ENCODE measurements at regions of chr6 and their contacts with region 1.

Region 1: DNA sequence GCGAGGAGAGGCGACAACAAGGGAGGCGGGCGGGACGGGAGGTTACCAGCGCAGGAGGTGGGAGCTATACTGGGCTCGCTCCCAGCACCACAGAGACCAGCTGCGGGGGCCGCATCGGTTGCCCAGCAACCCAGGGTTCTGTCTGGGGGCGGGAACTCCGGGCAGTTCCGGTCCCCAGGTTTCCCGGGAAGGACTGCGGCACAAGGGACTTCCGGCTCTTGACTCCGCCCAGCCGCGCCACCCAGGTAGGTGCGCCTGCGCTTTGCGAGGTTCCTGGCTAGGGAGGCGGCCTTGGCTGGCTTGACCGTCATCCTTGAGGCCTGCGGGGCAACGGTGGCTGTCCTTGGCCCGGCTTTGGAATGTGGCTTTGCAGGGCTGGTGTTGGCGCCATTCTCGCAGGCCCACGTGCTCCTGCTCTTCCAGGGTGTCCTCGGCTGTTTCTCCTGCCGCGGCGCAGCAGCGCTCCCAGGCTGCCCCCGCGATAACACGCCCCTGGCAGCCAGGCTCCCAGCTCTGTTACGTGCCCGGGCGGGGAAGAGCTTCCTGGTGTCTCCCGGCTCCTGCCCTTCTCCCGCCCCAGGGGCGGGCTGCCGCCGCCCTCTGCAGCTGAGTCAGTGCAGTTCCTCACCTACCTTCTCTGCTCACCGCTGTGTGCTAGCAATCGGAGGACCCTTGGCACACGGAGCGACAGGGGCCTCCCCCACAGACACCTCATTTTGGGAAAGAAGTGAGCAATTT is at the start of gene RSPH3:
- DNase-seq: peak; percentile 86
- H3K4me3 Mint-ChIP-seq: peak within 1 kb of the TSS; percentile 95
- H3K27ac Mint-ChIP-seq: peak within 1 kb of the TSS; percentile 91
- H3K4me1 Mint-ChIP-seq: peaks cover 52% of the 10 kb centered on the region
- H3K27me3 Mint-ChIP-seq: peaks cover 2% of the 10 kb centered on the region
- total RNA-seq, gene RSPH3: 3.8 and 4.2 TPM in 2 replicates

Region 2: DNA sequence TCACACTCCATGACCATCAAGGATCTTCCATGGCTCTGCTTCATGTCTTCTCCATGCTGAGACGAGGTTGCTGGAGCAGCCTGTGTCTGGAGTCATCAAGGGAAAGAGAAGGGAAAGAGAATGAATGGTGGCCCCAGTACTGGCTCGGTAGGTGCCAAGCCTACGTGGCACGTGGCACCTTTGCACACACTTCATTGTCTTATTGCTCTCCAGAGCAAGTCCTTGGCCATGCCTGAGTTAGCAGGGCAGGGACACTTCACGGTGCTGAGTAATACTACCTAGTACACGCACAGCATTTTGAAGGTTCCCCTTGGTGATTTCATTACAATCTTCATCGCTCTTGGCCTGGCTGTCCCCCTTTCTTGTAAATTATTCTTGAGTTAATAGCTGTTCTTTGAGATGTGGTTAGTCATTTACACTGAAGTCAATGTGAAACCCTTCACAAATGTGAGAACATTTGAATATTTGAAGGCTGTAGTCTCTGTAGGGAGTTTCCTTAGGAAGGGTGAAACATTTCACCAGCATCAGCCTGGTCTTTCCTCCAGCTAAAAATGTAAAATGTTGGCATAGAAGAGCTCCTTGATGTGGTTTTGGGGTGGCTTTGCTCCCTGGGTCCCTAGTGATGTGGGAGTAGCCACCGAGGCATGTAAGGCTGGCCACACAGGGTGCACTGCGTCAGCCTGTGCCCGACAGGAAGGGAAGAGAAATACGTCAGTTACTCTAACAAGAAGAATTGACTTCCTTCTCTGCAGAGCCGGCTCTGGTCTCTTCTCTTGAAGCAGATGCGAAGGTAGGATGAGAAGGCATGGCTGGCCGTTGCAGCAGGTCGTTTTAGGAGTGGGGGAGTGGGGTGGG is 350.3 kb before region 1 on chr6 and contains the start of gene SYTL3:
- intact Hi-C with region 1: loop called (anchors 1 kb)
- DNase-seq: peak; percentile 82
- H3K4me3 Mint-ChIP-seq: peak within 1 kb of the TSS; percentile 87
- H3K27ac Mint-ChIP-seq: peak within 1 kb of the TSS; percentile 93
- H3K4me1 Mint-ChIP-seq: peaks cover 74% of the 10 kb centered on the region
- H3K27me3 Mint-ChIP-seq: no peaks in the 10 kb centered on the region
- total RNA-seq, gene SYTL3: 123 and 139 TPM in 2 replicates

Region 3: DNA sequence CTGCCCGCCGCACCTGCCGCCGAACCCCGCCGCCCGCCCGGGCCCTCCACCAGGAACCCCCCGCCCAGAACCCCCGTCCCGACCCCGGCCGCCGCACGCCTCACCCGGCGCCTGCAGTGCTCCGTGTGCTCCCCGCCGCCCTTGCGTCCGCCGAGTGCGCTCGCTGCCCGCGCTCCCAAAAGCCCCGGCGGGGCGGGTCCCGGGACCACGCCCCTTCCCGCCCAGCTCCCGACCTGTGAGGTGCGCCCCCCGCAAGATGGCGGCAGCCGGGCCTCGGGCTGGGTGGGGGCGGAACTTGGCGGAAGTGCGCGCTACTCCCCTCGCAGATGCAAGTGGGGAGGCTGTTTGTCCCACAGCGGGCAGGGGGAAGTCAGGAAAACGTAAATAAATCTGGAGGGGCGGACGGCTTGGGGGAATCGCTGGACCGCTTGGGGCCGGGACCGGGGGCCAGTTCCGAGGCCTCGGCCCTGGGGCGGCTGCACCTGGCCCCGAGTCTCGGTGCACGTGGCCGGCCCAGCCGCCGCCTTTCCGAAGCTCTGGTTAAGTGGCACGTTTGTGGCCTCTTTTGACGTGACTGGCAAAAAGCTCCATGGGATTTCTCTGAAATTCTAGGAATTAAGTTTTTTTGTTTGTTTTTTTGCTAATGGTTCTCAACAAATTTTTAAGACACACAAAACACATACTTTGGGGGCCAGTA is 180.5 kb before region 1 on chr6 and contains the start of gene EZR:
- intact Hi-C with region 1: loop called (anchors 1 kb)
- DNase-seq: peak; percentile 71
- H3K4me3 Mint-ChIP-seq: peak within 1 kb of the TSS; percentile 79
- H3K27ac Mint-ChIP-seq: peak within 1 kb of the TSS; percentile 86
- H3K4me1 Mint-ChIP-seq: peaks cover 55% of the 10 kb centered on the region
- H3K27me3 Mint-ChIP-seq: no peaks in the 10 kb centered on the region
- total RNA-seq, gene EZR: 205 and 206 TPM in 2 replicates

Region 4: DNA sequence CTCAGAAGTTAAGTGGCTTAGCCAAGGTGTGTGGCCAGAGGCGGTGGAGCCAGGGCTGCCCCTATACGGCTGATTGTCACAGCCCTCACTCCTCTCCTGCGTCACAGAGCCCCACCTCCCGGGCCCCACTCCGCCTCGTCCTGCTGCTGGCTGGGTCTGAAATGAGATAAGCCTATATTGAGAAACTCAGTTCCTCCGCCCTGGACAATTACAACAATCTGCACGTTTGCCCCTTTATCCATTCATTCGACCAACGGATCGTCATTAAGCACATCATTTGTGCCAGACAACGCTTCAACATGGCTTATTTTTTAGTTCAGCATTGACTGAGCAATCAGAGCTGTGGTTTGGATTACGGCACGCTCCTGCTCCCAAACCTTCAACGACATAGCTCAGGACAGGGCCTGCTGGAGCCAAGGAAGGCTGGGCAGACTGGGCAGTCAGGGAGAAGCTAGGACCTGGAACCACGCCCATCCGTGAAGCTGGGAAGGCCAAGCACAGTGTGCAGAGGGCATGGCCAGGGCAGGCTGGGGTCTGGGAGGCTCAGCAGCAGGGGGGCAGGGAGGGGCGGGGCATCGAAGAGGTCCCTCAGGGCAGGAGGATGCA is 164.1 kb before region 1 on chr6:
- intact Hi-C with region 1: no loop called
- DNase-seq: no peak
- H3K4me3 Mint-ChIP-seq: no peak overlapping the region
- H3K27ac Mint-ChIP-seq: no peak overlapping the region
- H3K4me1 Mint-ChIP-seq: no peaks in the 10 kb centered on the region
- H3K27me3 Mint-ChIP-seq: peaks cover 6% of the 10 kb centered on the region

Region 5: GRCh38 chr6:158972241-158973233 is 27.3 kb before region 1 on chr6:
- intact Hi-C with region 1: loop called (anchors 1 kb)
- DNase-seq: no peak
- H3K4me3 Mint-ChIP-seq: no peak overlapping the region
- H3K27ac Mint-ChIP-seq: no peak overlapping the region
- H3K4me1 Mint-ChIP-seq: no peaks in the 10 kb centered on the region
- H3K27me3 Mint-ChIP-seq: peaks cover 3% of the 10 kb centered on the region

Region 6: DNA sequence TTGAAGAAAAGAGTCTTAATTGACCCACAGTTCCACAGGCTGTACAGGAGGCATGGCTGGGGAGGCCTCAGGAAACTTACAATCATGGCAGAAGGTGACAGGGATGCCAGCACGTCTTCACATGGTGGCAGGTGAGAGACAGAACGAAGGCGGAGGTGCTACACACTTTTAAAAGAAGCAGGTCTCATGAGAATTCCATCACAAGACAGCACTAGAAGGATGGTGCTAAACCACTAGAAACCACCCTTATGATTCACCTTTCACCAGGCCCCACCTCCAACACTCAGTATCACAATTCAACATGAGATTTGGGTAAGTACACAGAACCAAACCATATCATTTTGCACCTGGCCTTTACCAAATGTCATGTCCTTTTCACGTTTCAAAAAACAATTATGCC is 24.1 kb after region 1 on chr6:
- intact Hi-C with region 1: loop called (anchors 1 kb)
- DNase-seq: no peak
- H3K4me3 Mint-ChIP-seq: peak overlapping the region; percentile 41
- H3K27ac Mint-ChIP-seq: peak overlapping the region; percentile 70
- H3K4me1 Mint-ChIP-seq: peaks cover 22% of the 10 kb centered on the region
- H3K27me3 Mint-ChIP-seq: peaks cover 2% of the 10 kb centered on the region

Region 7: GRCh38 chr6:159056003-159056402 is 56.2 kb after region 1 on chr6:
- intact Hi-C with region 1: no loop called
- DNase-seq: no peak
- H3K4me3 Mint-ChIP-seq: no peak overlapping the region
- H3K27ac Mint-ChIP-seq: peak overlapping the region; percentile 72
- H3K4me1 Mint-ChIP-seq: peaks cover 62% of the 10 kb centered on the region
- H3K27me3 Mint-ChIP-seq: peaks cover 2% of the 10 kb centered on the region

Region 8: DNA sequence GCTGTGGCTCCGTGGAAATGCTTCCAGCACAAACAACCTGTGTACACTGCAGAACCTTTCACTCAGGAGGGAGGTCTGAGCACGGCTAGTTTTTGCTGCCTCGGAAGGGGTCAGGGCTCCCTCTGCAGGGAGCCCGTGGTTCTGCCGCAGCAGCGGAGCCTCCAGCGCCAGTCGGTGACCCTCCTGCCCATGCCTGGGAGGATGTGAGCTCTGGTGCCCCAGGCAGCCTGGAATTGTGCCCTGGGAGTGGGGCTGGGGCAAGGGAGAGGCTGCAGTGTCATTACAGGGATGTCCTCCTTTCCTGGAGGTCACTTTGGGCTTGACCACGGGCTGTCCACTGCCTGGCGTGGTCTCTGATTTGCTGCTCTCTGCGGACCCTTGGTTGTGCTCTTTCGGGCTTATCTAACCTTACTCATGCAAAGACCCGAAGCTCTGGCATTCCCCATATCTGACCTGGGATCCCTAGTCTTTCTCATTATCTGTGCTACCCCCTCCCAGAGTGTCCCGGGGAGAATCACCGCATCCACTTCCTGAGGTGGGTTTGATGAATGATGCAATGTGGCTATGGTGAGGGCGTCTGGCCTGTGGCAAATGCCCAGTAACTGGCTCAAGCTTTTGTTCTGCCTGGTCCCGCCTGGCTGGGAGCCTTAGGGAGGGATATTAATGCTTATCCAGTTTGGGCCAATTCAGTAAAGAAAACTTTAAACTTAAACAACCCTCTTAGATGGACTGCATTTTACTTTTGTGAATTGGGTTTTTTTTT is 104.5 kb after region 1 on chr6:
- intact Hi-C with region 1: loop called (anchors 1 kb)
- DNase-seq: peak; percentile 69
- H3K4me3 Mint-ChIP-seq: peak overlapping the region; percentile 67
- H3K27ac Mint-ChIP-seq: peak overlapping the region; percentile 63
- H3K4me1 Mint-ChIP-seq: peaks cover 80% of the 10 kb centered on the region
- H3K27me3 Mint-ChIP-seq: no peaks in the 10 kb centered on the region